Activated CD4-positive, alpha-beta T cell treated with anti-CD3 and anti-CD28 coated beads, Interleukin-2, amount 10 ng/mL, durations not matched to agents 24 days and 14 days (primary cell): ENCODE measurements at regions of chr4 and their contacts with region 1.

Region 1: GRCh38 chr4:2811830-2812611 is 19.1 kb downstream of the SH3BP2 start:
- DNase-seq: peak; percentile 90
- H3K4me3 Mint-ChIP-seq: peak overlapping the region; percentile 89
- H3K27ac Mint-ChIP-seq: peak overlapping the region; percentile 96
- H3K4me1 Mint-ChIP-seq: peaks cover 52% of the 10 kb centered on the region
- H3K27me3 Mint-ChIP-seq: no peaks in the 10 kb centered on the region

Region 2: DNA sequence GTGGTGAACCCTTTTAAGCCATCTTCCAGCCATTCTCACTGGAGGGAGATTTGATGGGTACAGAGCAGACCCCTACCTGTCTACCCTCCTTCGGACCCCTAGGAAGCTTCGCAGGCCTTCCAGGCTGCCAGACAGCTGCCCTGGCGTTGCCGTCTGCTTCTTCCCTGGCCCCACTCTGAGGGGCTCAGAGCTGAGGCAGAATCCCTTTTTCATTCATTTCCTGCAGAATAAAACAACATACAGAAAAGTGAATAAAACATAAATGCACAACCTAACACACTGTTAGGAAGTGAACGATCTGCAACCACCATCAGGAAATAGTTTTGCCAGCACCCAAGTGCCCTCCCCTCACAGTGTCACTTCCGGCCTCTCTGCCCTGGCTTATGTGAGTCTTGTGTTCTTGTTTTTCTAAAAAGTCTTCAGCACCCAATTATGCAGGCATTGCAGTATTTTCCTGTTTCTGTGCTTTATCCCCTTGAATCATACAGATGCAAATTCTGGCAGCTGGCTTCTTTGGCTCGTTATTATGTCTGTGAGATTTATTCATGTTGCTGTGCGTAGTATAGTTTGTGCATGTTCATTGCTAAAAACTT is 26.0 kb after region 1 on chr4:
- intact Hi-C with region 1: loop called (anchors 2 kb)
- DNase-seq: peak; percentile 91
- H3K4me3 Mint-ChIP-seq: peak overlapping the region; percentile 70
- H3K27ac Mint-ChIP-seq: peak overlapping the region; percentile 82
- H3K4me1 Mint-ChIP-seq: peaks cover 49% of the 10 kb centered on the region
- H3K27me3 Mint-ChIP-seq: no peaks in the 10 kb centered on the region